ENCODE measurements at regions of chr19 and their contacts with region 1.

Region 1: DNA sequence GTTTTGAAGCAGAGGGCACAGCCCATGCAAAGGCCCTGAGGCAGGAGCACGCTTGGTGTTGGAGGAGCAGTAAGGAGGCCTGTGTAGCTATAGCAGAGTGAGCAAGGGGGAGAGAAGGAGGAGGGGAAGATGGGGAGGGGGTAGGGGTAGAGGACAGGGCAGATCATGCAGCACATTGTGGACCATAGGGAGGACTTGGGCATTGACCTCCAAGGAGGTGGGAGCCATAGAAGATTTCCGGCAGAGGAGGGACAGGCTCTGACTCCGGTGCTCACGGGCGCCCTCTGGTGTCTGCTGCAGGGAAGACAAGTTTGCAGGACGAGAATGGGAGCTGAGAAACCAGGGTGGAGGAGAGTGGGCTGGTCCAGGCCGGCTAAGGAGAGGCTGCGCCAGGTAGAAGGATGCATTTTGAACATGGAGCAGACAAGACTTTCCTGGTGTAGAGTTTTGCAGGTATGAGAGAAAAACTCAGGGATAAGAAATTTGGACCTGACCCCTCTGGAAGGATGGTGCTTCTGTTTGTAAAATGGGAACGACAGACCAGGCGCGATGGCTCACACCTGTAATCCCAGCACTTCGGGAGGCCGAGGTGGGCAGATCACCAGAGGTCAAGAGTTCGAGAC is 13.7 kb upstream of the CREB3L3 start:
- DNase-seq: peak; percentile 90
- CTCF ChIP-seq: peak; percentile 89

Region 2: DNA sequence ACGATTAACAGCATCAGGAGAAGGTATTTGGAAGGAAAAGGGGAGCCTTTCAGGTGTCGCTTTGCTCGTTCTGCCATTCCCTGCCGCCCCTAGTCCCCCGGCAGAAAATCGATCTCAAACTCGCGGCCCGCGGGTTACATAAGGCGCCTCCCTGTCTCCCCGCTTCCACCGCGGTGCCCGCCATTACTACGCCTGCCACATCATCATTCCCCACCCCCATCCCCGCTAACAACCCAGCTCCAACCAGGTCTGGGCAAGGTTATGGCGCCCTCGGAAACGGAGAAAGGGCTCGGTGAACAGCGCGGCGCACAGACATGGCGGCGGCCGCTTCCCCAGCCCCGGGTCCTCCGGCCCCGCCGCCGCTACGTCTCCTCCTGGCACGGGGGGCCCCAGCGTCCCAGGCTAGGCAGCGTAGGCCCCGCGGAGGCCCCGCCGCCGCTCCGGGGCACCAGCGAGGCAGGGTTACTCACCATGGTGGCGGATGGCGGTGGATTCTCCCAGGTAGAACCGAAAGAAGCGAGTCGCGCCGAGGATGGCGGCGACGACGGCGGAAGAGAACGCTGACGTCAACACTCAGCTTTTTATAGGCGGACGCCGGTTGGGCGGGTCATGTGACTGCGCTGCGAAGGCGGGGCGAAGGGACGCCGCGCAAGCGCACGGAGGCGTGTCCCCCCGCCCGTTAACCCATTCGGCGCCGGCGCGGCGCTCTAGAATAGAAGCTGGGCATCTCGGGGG is 154.7 kb before region 1 on chr19 and contains the start of gene EEF2:
- CTCF ChIA-PET with region 1: interaction called, 17 read pairs
- POLR2A ChIA-PET with region 1: no interaction called
- DNase-seq: peak; percentile 93
- CTCF ChIP-seq: no peak

Region 3: DNA sequence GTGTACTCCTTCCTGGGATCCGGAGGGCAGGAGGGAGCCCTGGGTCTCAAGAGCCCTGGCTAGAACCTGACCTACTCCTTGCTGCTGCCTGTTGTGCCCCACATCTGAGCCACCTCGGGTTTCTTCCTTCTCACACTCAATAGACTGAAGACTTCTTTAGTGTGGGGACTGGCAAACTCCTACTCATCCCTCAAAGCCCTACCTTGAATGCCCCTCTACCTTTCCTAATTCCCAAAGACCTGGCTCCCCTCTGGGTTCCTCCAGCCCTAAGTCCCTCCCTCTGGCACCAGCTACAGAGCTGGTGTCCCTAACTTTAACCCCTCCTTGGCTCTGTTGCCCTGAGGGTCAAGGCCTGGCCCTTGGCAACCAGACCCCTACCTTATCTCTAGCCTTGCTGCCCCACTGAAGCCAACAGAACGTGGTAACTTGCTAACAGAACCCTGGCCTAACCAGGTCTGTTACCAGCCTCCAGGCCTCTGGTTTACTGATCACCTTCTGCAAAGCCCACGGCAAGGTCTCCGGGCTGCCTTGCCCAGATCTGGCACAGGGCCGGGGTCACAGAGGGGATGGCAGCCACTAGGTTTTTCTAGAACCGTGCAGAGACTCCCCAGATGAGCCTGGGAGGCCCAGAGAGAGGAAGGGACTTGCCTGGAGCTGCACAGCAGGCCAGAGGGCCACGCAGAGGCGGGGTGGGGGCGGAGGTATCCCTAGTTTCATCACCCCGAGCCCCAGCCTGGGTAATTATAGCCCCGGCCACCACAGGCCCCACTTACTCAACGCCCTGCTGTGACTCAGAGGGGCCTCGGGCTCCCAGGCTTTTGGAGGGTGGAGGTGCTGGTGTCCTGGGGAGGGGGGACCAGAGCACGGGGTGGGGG is 88.3 kb before region 1 on chr19:
- CTCF ChIA-PET with region 1: no interaction called
- POLR2A ChIA-PET with region 1: no interaction called
- DNase-seq: no peak
- CTCF ChIP-seq: no peak

Region 4: DNA sequence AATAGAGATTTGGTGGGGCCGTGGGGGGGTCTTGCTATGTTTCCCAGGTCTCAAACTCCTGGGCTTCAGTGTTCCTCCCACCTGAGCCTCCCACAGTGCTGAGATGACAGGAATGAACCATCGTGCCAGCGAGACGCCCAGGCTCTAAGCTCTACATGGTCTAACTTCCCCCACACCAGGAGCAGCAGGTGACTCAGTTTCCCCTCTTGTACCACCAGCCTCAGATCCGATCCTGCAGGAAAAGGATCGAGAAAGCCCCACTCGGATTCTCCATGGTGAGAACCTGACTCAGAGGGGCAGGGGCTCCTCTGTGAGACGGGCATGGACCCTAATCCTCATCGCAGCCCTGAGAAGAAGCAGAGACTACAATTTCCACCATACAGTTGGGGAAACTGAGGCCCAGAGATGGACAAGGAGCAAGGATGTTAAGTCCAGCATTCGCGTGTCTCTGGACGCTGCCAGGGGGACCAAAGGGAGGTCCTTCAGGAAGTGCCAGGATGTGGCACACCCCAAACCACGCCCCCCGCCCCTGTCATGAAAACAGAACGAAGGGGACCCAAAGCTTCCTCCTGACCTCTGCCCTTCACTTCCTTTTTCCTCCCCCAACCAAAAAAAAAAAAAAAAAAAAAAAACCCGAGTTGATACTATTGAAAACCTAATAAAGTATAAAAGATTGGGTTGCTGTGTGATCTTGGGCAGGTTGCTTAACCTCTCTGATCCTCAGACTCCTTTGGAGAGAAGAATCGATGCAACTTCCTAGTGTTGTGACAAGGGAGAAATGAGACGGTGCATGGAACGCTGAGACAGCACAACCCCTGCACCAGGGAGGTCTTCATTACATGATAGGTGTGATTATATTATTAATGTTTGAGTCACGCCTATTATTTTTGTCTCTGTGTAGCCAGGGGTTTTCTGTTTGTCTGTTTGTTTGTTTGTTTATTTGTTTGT is 70.4 kb before region 1 on chr19:
- CTCF ChIA-PET with region 1: no interaction called
- POLR2A ChIA-PET with region 1: no interaction called
- DNase-seq: no peak
- CTCF ChIP-seq: no peak

Region 5: GRCh38 chr19:4108767-4109625 is 30.7 kb before region 1 on chr19:
- CTCF ChIA-PET with region 1: interaction called, 46 read pairs
- POLR2A ChIA-PET with region 1: no interaction called
- DNase-seq: peak; percentile 86
- CTCF ChIP-seq: no peak

Region 6: DNA sequence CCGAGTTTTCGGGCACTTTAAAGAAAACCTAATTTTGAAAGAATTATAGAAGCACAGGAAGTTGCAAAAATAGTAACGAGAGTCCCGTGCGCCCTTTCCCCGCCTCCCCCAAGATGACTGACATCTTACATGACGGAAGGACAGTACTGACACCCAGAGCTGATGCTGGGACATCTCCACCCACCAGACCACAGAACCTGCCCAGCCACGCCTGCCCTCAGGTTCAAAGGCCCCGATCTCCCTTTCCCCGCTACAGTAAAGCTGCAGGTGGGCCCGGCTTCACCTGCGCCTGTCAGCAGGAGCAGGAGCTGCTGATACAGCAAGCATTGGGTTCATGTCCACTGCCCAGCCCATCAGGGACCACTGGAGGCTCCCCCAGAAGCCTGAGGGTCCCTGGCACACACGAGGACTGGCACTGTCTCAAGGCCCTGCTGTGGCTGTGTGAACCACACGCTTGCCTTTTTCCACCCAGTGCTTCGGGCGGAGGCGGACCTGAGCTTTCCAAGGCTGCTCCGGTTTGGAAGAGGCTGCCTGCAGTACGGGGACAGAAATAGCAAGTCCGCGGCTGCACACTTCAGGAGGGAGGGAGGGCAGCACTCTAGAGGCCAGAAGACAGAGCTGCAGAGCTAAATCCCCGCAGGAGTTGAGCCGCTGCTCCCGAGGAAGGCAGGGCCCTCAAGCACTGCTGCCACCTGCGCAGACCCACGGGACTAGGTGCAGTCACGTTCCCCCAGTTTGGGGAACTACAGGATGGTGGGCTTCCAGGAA is 24.5 kb before region 1 on chr19:
- CTCF ChIA-PET with region 1: interaction called, 46 read pairs
- POLR2A ChIA-PET with region 1: no interaction called
- DNase-seq: peak; percentile 90
- CTCF ChIP-seq: no peak

Region 7: DNA sequence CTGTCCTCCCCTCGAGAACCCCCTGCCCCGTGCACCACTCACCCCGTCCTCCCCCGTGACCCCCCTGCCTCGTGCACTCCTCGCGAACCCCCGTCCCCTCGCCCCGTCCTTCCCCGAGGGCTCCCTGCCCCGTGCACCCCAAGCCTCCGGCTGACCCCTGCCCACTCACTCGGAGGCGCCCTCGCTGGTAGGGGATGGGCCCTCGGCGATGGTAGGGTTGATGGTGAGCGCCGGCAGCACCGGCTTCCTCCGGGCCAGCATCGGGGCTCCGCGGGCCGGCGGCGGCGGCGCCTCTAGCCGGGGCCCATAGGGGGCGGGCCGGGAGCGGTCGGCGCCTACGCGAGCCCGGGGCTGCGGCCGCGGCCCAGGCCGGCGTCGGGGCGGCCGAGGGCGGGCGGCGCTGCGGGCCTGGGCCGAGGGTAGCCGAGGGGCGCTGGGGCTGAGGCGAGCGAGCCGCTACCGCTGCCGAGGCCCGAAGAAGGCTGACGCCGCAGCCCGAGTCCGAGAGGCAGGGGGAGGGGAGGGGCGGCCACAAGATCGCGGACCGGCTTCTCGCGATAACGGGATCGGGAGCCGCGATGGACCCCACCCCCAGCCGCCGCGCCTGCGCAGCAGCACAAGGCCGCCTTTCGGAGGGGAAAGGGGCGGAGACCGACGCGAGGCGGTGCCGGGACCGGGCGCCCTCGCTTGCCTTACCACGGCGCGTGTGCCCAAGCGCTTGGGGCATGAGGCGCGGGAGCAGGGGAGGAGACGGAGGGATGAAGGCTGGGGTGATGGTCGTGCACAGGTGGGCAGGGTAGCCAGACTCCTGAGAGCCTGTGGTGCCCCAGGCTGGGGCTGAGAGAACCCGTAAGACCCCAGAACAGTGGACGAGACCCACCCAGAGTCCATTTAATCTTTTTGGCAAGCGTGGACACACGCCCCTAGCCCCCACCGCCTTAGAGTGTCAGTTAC is 15.8 kb before region 1 on chr19 and contains the start of gene MAP2K2:
- CTCF ChIA-PET with region 1: interaction called, 31 read pairs
- POLR2A ChIA-PET with region 1: no interaction called
- DNase-seq: peak; percentile 98
- CTCF ChIP-seq: no peak

Region 8: GRCh38 chr19:4172861-4173473 is 33.2 kb after region 1 on chr19:
- CTCF ChIA-PET with region 1: interaction called, 21 read pairs
- POLR2A ChIA-PET with region 1: no interaction called
- DNase-seq: peak; percentile 58
- CTCF ChIP-seq: no peak

Region 9: GRCh38 chr19:4199699-4200293 is 60.1 kb after region 1 on chr19:
- CTCF ChIA-PET with region 1: interaction called, 17 read pairs
- POLR2A ChIA-PET with region 1: no interaction called
- DNase-seq: no peak
- CTCF ChIP-seq: no peak

Measured in GM10248 (cell line).